ENCODE measurements at regions of chr12 and their contacts with region 1.

Region 1: DNA sequence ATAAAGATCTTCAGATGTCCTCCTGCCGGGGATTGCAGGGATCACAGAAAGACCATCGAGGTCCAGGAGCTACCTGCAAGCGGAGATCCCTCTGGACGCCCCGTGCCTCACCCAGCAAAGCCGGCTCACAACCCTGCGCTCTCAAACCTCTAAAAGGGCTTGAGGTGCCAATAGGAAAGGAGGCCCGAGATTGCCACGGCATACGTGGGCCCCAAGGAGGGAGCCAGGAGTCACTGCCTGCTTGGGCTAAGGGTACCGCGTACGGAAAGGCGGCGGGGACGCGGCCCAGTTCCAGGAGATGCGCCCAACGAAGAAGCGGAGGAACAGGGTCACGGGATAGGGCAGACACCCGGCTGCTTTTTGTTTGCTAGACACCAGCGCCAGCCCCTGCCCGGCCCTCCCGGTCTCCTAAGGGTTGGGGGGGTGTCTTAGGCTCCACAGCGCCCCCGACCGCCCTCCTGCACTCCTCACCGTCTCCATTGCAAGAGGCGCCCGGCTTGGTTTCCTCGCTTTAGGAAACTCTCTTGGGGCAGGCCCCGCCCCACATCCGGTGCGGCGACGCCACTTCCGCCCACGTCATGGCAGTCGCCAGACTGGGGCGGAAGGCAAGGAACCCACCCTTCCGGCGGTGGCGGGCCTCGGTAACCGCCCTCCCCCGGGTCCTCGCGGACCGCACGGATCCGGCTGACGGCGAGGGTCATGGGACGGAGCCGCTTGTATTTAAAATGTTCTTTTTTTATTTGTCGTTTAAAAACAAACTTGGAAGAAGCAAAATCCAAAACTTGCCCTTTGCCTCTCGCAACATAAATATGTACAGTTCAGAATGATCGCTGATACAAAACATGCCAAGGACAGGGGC is at the start of gene PRKAG1:
- DNase-seq: peak; percentile 96
- ATAC-seq: peak; percentile 93 to 97 (median 96)
- H3K4me3 ChIP-seq: peak within 1 kb of the TSS; percentile 56 to 92 (median 81)
- H3K27ac ChIP-seq: peak within 1 kb of the TSS; percentile 78 to 99 (median 96)
- H3K4me1 ChIP-seq: peaks cover 0 to 54% (median 37%) of the 10 kb centered on the region in 9 donors
- H3K27me3 ChIP-seq: no peaks in the 10 kb centered on the region
- CTCF ChIP-seq: peak in 8 of 9 donors; percentile 22 to 69 (median 55)
- total RNA-seq, gene PRKAG1: 79.4 to 110 (median 100) TPM

Region 2: GRCh38 chr12:48817873-48818830 is 200.3 kb before region 1 on chr12 and contains the start of gene CACNB3:
- intact Hi-C with region 1: no loop called
- DNase-seq: peak; percentile 75 to 77
- ATAC-seq: peak; percentile 5 to 41 (median 23)
- H3K4me3 ChIP-seq: peak within 1 kb of the TSS; percentile 55 to 88 (median 74)
- H3K27ac ChIP-seq: peak within 1 kb of the TSS in 9 of 10 donors; percentile 28 to 75 (median 49)
- H3K4me1 ChIP-seq: peaks cover 11 to 49% (median 40%) of the 10 kb centered on the region in 9 donors
- H3K27me3 ChIP-seq: peaks cover 0 to 38% (median 0%) of the 10 kb centered on the region in 7 donors
- CTCF ChIP-seq: no peak
- total RNA-seq, gene CACNB3: 2.2 to 7.8 (median 4.1) TPM

Region 3: DNA sequence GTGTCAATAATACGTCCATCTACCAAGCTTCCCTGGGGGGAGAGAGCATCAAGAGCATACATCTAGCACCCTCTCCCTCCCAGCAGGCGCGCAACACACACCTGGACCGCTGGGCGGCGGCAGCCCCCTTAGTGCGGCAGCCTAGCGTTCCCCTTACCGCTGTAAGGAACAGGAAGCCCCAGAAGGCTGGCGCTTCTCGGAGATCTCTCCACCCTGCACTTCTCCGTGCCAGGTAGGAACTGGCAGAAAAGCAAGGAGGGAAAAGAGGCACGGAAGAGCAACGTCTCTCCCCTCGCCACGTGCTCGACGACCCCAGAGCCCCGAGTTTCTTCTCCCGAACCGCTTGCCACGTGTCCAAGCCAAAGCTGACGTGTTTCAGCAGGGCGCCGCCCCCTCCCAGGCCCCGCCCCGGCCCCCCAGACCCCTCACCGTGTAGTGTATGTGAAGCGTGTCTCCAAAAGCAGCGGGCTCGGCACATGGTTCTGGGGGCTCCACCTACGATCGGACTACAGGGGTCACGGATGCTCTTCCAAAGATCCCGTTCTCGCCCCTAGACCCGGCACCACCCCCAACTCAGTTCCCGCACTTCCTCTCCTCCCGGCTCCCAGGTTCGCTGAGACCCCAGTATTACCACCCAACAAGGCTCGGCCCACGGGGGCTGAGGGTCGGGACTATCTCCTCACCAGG is 93.7 kb before region 1 on chr12:
- intact Hi-C with region 1: no loop called
- DNase-seq: peak; percentile 29 to 48
- ATAC-seq: peak; percentile 62 to 86 (median 76)
- H3K4me3 ChIP-seq: peak overlapping the region; percentile 57 to 90 (median 85)
- H3K27ac ChIP-seq: peak overlapping the region in 4 of 10 donors; percentile 37 to 89 (median 56)
- H3K4me1 ChIP-seq: peaks cover 0 to 17% (median 5%) of the 10 kb centered on the region in 9 donors
- H3K27me3 ChIP-seq: no peaks in the 10 kb centered on the region
- CTCF ChIP-seq: peak; percentile 11 to 63 (median 49)

Region 4: GRCh38 chr12:48995061-48995879 is 23.2 kb before region 1 on chr12:
- intact Hi-C with region 1: loop called in 1 of 10 experiments (anchors 1 kb)
- DNase-seq: peak; percentile 79 to 80
- ATAC-seq: peak; percentile 61 to 87 (median 79)
- H3K4me3 ChIP-seq: peak overlapping the region in 9 of 10 donors; percentile 8 to 40 (median 29)
- H3K27ac ChIP-seq: no peak overlapping the region
- H3K4me1 ChIP-seq: peaks cover 13 to 54% (median 39%) of the 10 kb centered on the region in 9 donors
- H3K27me3 ChIP-seq: peaks cover 4 to 93% (median 55%) of the 10 kb centered on the region in 7 donors
- CTCF ChIP-seq: peak; percentile 65 to 91 (median 87)

Measured in heart right ventricle (tissue), 16 donors.